H1 (cell line): ENCODE measurements at regions of chr15 and their contacts with region 1.

Region 1: DNA sequence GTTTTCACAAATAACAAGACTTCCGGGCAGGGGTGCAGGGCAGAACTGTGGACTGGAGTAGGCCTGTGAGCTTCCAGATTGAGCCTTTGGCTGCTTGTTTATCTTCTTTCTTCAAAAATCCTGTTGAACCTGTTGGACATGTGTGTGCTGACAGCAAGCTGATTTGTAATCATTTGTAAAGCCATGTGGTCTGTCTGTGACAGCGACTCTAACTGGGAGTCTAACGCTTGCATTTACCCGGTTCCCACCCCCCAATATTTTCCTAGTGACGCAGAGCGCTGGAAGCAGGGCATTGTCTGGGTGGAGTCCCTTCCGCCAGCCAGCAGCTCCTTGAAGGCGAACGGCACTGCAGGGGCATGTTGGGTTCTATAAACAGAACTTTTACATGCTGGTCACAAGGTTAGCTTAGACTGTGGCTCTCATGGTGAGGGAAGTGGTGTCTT is 85.7 kb upstream of the MYZAP start:
- DNase-seq: no peak
- H3K4me3 ChIP-seq: no peak overlapping the region
- H3K27ac ChIP-seq: no peak overlapping the region
- H3K4me1 ChIP-seq: peaks cover 0 to 8% (median 5%) of the 10 kb centered on the region in 4 experiments
- H3K27me3 ChIP-seq: no peaks in the 10 kb centered on the region
- CTCF ChIP-seq: no peak
- EP300 ChIP-seq: no peak
- POLR2A ChIP-seq: no peak
- RAD21 ChIP-seq: no peak

Region 2: DNA sequence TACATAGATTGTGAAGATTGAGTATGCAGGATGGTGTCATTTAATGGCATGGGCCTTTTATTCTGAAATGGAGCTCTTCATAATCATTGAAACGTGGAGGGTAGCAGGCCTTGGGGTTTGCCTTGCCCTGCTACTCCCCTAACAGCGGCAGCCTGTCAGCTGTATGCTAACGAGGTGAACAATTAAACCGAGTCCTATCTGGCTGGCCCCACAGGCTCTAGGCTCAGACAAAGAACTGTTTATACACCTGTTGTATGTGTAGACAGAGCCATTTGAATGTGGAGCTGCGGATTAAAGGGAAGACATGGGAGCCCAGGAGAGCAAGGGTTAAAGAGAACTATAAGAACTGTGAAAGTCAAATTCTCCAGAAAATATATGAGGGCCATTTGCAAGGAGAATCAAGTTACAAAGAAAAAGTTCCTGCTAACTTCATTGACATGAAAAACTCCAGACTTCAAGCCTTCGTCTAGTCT is 246.4 kb before region 1 on chr15:
- CTCF ChIA-PET with region 1: no interaction called
- POLR2A ChIA-PET with region 1: no interaction called
- DNase-seq: peak; percentile 38 to 61
- H3K4me3 ChIP-seq: peak overlapping the region in 1 of 4 experiments; percentile 27; a peak in 2 of 8 replicates
- H3K27ac ChIP-seq: no peak overlapping the region
- H3K4me1 ChIP-seq: peaks cover 0 to 2% (median 0%) of the 10 kb centered on the region in 4 experiments; a peak in 1 of 7 replicates
- H3K27me3 ChIP-seq: no peaks in the 10 kb centered on the region
- CTCF ChIP-seq: no peak
- EP300 ChIP-seq: no peak
- POLR2A ChIP-seq: no peak
- RAD21 ChIP-seq: peak; percentile 5 to 35; a peak in 2 of 4 replicates

Region 3: GRCh38 chr15:57323806-57324589 is 182.0 kb before region 1 on chr15:
- CTCF ChIA-PET with region 1: interaction called, 19 read pairs
- POLR2A ChIA-PET with region 1: no interaction called
- DNase-seq: no peak
- H3K4me3 ChIP-seq: no peak overlapping the region
- H3K27ac ChIP-seq: no peak overlapping the region
- H3K4me1 ChIP-seq: peaks cover 2 to 13% (median 5%) of the 10 kb centered on the region in 4 experiments; a peak in 6 of 7 replicates
- H3K27me3 ChIP-seq: no peaks in the 10 kb centered on the region; a peak in 1 of 7 replicates
- CTCF ChIP-seq: no peak
- EP300 ChIP-seq: no peak
- POLR2A ChIP-seq: no peak
- RAD21 ChIP-seq: no peak

Region 4: GRCh38 chr15:57364282-57365007 is 141.5 kb before region 1 on chr15:
- CTCF ChIA-PET with region 1: interaction called, 38 read pairs
- POLR2A ChIA-PET with region 1: no interaction called
- DNase-seq: no peak
- H3K4me3 ChIP-seq: no peak overlapping the region
- H3K27ac ChIP-seq: no peak overlapping the region
- H3K4me1 ChIP-seq: peaks cover 0 to 7% (median 4%) of the 10 kb centered on the region in 4 experiments; a peak in 5 of 7 replicates
- H3K27me3 ChIP-seq: no peaks in the 10 kb centered on the region
- CTCF ChIP-seq: peak; percentile 36 to 54 (median 39); a peak in 3 of 4 replicates
- EP300 ChIP-seq: no peak
- POLR2A ChIP-seq: no peak
- RAD21 ChIP-seq: peak in 1 of 2 experiments; percentile 52; a peak in 2 of 4 replicates

Region 5: DNA sequence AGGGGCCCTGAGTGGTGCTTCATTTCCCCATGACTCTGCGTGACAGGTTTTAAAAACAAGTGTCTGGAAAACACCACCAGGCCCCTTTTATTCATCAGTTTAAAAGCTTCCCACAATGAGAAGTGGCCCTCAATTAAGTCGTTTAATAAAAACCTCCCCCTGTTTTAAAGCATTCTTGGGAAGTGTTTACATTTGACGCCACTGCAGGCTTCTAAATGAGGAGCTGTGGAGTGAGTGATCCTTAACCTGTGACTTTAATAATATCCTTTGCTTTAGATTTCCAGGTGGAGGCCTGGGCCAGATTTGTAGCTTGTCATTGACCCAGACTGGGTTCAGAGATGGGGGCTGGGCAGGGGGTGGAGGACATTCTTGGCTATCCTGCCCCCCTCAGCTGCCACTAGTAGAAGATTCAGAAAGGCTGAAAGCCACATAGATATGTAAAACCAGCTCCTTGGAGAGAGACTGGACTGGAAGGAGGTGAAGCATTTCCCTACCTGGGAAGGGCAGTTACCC is 118.3 kb before region 1 on chr15:
- CTCF ChIA-PET with region 1: interaction called, 17 read pairs
- POLR2A ChIA-PET with region 1: interaction called, 4 read pairs
- DNase-seq: no peak
- H3K4me3 ChIP-seq: peak overlapping the region; percentile 42 to 56 (median 46); a peak in 7 of 8 replicates
- H3K27ac ChIP-seq: peak overlapping the region; percentile 68; the same call in 1 of the 2 replicates
- H3K4me1 ChIP-seq: peaks cover 12 to 45% (median 35%) of the 10 kb centered on the region in 4 experiments; a peak in 6 of 7 replicates
- H3K27me3 ChIP-seq: no peaks in the 10 kb centered on the region
- CTCF ChIP-seq: no peak
- EP300 ChIP-seq: no peak
- POLR2A ChIP-seq: 0 out of 3 replicates have a peak, but pooled peaks of 1 of the 2 experiments have one; percentile 21
- RAD21 ChIP-seq: peak in 1 of 2 experiments; percentile 15; a peak in 1 of 4 replicates

Region 6: GRCh38 chr15:57477736-57478522 is 28.0 kb before region 1 on chr15:
- CTCF ChIA-PET with region 1: interaction called, 16 read pairs
- POLR2A ChIA-PET with region 1: no interaction called
- DNase-seq: no peak
- H3K4me3 ChIP-seq: no peak overlapping the region
- H3K27ac ChIP-seq: peak overlapping the region; percentile 52
- H3K4me1 ChIP-seq: peaks cover 7 to 19% (median 13%) of the 10 kb centered on the region in 4 experiments
- H3K27me3 ChIP-seq: no peaks in the 10 kb centered on the region
- CTCF ChIP-seq: no peak
- EP300 ChIP-seq: no peak; a peak in 1 of 3 replicates
- POLR2A ChIP-seq: no peak
- RAD21 ChIP-seq: no peak

Region 7: DNA sequence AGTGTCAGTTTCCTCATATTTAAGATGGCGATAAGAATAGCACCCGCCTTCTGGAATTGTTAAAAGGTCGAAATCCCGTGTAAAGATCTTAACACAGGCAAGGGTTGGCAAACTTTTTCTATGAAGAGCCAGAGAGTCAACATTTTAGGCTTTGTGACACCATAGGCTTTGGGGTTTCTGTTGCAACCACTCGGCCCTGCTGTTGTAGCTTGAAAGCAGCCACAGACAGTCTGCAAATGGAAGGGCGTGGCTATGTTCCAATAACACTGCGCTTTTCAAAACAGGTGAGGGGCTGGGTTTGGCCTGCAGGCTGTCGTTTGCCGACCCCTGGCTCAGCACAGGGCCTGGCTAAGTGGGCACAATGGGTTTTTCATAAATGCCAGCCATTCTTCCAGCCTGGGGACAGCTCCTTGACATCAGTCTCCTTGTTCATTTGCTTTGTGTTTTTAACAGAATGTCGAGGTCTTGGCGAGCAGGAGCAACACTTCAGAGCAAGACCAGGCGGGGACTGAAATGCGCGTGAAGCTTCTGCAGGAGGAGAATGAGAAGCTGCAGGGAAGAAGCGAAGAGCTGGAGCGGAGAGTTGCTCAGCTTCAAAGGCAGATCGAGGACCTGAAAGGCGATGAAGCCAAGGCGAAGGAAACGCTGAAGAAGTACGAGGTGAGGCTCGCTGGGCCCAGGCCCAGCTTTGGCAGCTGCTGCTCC is 10.5 kb after region 1 on chr15:
- CTCF ChIA-PET with region 1: interaction called, 40 read pairs
- POLR2A ChIA-PET with region 1: no interaction called
- DNase-seq: no peak
- H3K4me3 ChIP-seq: no peak overlapping the region
- H3K27ac ChIP-seq: no peak overlapping the region
- H3K4me1 ChIP-seq: no peaks in the 10 kb centered on the region
- H3K27me3 ChIP-seq: no peaks in the 10 kb centered on the region
- CTCF ChIP-seq: no peak
- EP300 ChIP-seq: no peak
- POLR2A ChIP-seq: no peak
- RAD21 ChIP-seq: no peak

Region 8: DNA sequence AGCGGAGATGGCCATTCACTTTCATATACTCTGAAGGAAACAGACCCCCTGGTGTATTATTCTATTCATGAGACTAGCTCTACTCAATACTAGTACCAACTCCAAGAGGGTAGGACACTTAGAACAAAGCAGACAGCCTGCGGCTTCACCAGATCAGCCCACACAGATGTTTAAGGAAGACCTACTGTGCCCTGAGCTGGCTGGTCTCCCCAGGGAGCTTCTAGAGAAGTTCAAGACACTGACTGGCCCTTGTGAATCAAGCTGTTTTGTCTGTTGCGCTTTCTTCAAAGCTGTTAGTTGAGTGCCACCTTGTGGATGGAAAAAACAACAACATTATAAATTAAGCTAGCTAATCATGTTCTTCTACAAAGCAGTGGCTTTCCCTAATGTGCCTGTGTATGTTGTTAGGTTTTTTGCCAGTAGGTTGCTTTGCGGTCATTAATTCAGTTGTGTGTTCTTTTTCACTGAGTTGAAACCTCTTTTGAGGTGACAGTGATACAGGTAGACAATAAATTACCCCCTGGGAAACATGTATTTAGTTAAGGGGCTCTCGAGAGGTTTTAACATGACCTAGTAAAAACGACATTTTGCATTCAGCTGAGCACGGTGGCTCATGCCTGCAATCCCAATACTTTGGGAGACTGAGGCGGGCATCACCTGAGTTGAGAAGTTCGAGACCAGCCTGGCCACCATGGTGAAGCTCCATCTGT is 21.6 kb after region 1 on chr15:
- CTCF ChIA-PET with region 1: interaction called, 48 read pairs
- POLR2A ChIA-PET with region 1: no interaction called
- DNase-seq: peak; percentile 50 to 63
- H3K4me3 ChIP-seq: no peak overlapping the region
- H3K27ac ChIP-seq: no peak overlapping the region
- H3K4me1 ChIP-seq: peaks cover 0 to 5% (median 0%) of the 10 kb centered on the region in 4 experiments; a peak in 1 of 7 replicates
- H3K27me3 ChIP-seq: no peaks in the 10 kb centered on the region
- CTCF ChIP-seq: peak in 2 of 3 experiments; percentile 62 to 67; a peak in 3 of 4 replicates
- EP300 ChIP-seq: no peak
- POLR2A ChIP-seq: no peak
- RAD21 ChIP-seq: peak; percentile 88 to 89

Region 9: GRCh38 chr15:57573151-57573550 is 67.2 kb after region 1 on chr15:
- CTCF ChIA-PET with region 1: no interaction called
- POLR2A ChIA-PET with region 1: no interaction called
- DNase-seq: no peak
- H3K4me3 ChIP-seq: no peak overlapping the region
- H3K27ac ChIP-seq: no peak overlapping the region
- H3K4me1 ChIP-seq: peaks cover 0 to 2% (median 0%) of the 10 kb centered on the region in 4 experiments; a peak in 2 of 7 replicates
- H3K27me3 ChIP-seq: no peaks in the 10 kb centered on the region
- CTCF ChIP-seq: no peak
- EP300 ChIP-seq: no peak
- POLR2A ChIP-seq: no peak
- RAD21 ChIP-seq: no peak